Naive thymus-derived CD8-positive, alpha-beta T cell (primary cell): ENCODE measurements at regions of chrX and their contacts with region 1.

Region 1: GRCh38 chrX:24479924-24480323 is 14.8 kb downstream of the PDK3 start:
- DNase-seq: peak; percentile 34 to 89 (median 73)
- ATAC-seq: peak; percentile 96 to 97
- H3K4me3 Mint-ChIP-seq: peak overlapping the region; percentile 57 to 87 (median 74)
- H3K27ac Mint-ChIP-seq: peak overlapping the region; percentile 85 to 97 (median 94)
- H3K4me1 Mint-ChIP-seq: peaks cover 13 to 82% (median 66%) of the 10 kb centered on the region in 4 donors
- H3K27me3 Mint-ChIP-seq: no peaks in the 10 kb centered on the region

Region 2: GRCh38 chrX:24380262-24381187 is 99.4 kb before region 1 on chrX:
- POLR2A ChIA-PET with region 1: no interaction called
- DNase-seq: no peak
- ATAC-seq: no peak
- H3K4me3 Mint-ChIP-seq: no peak overlapping the region
- H3K27ac Mint-ChIP-seq: no peak overlapping the region
- H3K4me1 Mint-ChIP-seq: no peaks in the 10 kb centered on the region
- H3K27me3 Mint-ChIP-seq: peaks cover under 1 to 9% (median 3%) of the 10 kb centered on the region in 5 donors

Region 3: DNA sequence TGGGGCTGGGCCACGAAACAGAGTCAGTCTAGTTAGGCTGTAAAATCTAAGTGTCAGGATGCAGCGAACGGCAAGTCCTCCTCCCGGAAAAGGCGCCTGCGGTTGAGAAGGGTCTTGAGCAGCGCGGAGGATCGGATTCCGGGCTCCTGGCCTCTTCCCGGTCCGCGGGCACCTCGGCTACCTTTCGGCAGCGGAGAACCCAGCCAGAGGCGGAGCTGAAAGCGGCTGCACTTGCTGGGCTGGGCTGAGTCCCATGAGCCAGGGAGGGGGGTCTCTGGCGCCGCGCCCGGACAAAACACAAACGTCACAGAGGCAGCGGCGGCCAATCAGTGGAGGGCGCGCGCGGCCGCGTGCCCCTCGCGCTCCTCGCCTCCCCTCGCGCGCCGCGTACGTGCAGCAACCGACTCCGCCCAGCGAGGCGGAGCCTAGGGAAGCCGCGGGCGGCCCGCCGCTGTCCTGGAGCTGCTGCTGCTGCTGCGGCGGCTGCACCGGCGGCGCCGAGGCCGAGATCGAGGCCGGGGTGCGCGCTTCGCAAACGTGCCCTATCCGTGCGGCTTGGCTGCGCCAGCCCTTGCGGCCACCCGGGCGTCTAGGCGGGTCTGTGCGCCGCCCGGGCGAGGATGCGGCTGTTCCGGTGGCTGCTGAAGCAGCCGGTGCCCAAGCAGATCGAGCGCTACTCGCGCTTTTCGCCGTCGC is 14.9 kb before region 1 on chrX and contains the start of gene PDK3:
- POLR2A ChIA-PET with region 1: interaction called, 32 read pairs
- DNase-seq: peak; percentile 77 to 94 (median 88)
- ATAC-seq: peak; percentile 90 to 94
- H3K4me3 Mint-ChIP-seq: peak within 1 kb of the TSS; percentile 79 to 92 (median 84)
- H3K27ac Mint-ChIP-seq: peak within 1 kb of the TSS; percentile 82 to 97 (median 94)
- H3K4me1 Mint-ChIP-seq: peaks cover 11 to 38% (median 35%) of the 10 kb centered on the region in 4 donors
- H3K27me3 Mint-ChIP-seq: no peaks in the 10 kb centered on the region
- polyA plus RNA-seq, gene PDK3: 34.4 to 40.4 (median 39.9) TPM